Psoas muscle (tissue), 8 donors: ENCODE measurements at regions of chr17 and their contacts with region 1.

Region 1: DNA sequence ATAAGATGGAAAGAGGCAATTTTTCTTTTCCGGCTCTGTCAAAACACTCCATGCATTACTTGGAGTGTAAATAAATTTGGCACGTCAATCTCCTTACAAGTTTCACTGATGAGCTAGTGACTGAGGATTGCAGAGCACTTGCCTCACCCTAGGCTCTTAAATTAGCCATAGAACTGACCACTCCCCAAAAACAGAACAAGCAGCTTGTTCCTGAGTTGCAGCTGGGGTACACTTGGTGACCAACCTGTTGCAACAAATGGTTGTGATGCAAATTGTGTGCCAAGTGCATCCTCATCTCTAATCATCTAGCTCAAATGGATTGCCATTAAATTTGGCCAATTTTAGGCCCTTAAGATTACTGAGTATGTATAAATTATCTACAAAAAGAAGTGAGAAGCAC is 67.0 kb downstream of the CACNG1 start:
- DNase-seq: no peak
- ATAC-seq: peak in 2 of 4 donors; percentile 74 to 78
- H3K4me3 ChIP-seq: no peak overlapping the region
- H3K27ac ChIP-seq: no peak overlapping the region
- H3K4me1 ChIP-seq: no peaks in the 10 kb centered on the region
- H3K27me3 ChIP-seq: no peaks in the 10 kb centered on the region
- CTCF ChIP-seq: no peak

Region 2: GRCh38 chr17:66892037-66892645 is 219.2 kb before region 1 on chr17:
- intact Hi-C with region 1: no loop called
- DNase-seq: no peak
- ATAC-seq: no peak
- H3K4me3 ChIP-seq: no peak overlapping the region
- H3K27ac ChIP-seq: no peak overlapping the region
- H3K4me1 ChIP-seq: no peaks in the 10 kb centered on the region
- H3K27me3 ChIP-seq: no peaks in the 10 kb centered on the region
- CTCF ChIP-seq: no peak

Region 3: DNA sequence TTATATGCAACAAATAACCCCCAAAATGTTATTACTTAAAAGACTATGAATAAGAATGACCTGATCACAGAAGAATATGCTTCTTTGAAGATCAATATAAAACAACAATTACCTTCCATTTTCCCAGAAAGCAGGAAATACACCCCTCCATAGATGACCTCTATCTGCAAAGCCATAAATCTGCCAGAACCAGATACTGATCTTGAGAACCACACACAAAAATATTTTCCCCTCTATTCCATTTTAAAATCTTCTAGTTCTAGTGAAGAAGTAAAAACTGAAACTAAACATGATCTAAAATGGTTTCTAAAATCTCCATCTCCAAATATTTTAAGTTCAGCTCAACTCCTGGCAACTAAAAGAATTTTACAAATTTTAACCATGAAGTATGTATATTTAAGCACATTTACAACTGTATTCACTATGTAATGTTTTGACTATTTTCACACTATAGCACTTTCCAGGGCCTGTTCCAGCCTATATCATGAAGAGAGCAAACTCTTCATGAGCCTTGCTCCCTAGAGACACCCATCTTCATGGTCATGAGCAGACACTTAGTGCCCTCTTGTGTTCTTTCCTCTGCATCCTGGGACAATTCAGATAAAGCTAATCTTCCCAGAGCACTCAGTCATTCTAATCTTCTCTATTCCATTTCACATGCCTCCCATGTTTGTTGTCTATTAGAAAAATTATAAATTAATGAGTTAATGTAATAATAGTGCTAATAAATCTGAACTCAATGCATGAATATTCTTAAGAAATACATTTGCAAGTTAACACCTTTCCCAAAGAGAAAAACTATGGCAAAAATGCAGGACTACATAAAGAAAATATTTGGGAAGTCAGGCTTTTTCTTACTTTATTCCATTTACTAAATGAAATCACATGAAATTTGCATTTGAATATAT is 46.7 kb after region 1 on chr17:
- intact Hi-C with region 1: loop called in 1 of 2 experiments (anchors 2 kb)
- DNase-seq: no peak
- ATAC-seq: peak; percentile 61 to 90 (median 75)
- H3K4me3 ChIP-seq: no peak overlapping the region
- H3K27ac ChIP-seq: no peak overlapping the region
- H3K4me1 ChIP-seq: peaks cover 12% of the 10 kb centered on the region
- H3K27me3 ChIP-seq: no peaks in the 10 kb centered on the region
- CTCF ChIP-seq: peak; percentile 45